ENCODE measurements at regions of chr9 and their contacts with region 1.

Region 1: DNA sequence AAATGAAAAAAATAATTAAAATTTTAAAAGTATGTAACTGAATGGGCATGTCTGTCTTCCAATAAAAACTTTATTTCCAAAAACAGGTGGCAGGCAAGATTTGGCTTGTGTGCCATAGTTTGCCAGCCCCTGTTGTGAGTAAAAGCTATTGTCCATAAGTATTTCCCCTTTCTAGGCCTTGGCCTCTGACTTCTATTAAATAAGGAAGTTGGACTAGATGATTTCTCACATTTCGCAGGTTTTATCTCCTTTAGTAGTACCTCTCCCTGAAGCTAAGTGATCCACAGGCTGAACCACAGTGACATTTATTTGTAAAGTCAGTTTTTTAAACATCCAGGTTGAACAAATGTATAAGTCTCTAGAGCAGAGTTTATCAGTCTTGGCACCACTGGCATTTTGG is 41.3 kb downstream of the RECK start:
- DNase-seq: no peak
- H3K4me3 ChIP-seq: no peak overlapping the region
- H3K27ac ChIP-seq: no peak overlapping the region
- H3K4me1 ChIP-seq: no peaks in the 10 kb centered on the region
- CTCF ChIP-seq: no peak

Region 2: GRCh38 chr9:35611230-35611797 is 466.7 kb before region 1 on chr9:
- CTCF ChIA-PET with region 1: no interaction called
- POLR2A ChIA-PET with region 1: no interaction called
- intact Hi-C with region 1: no loop called
- DNase-seq: peak; percentile 74
- H3K4me3 ChIP-seq: no peak overlapping the region
- H3K27ac ChIP-seq: no peak overlapping the region
- H3K4me1 ChIP-seq: peaks cover 25% of the 10 kb centered on the region
- CTCF ChIP-seq: peak; percentile 84

Region 3: DNA sequence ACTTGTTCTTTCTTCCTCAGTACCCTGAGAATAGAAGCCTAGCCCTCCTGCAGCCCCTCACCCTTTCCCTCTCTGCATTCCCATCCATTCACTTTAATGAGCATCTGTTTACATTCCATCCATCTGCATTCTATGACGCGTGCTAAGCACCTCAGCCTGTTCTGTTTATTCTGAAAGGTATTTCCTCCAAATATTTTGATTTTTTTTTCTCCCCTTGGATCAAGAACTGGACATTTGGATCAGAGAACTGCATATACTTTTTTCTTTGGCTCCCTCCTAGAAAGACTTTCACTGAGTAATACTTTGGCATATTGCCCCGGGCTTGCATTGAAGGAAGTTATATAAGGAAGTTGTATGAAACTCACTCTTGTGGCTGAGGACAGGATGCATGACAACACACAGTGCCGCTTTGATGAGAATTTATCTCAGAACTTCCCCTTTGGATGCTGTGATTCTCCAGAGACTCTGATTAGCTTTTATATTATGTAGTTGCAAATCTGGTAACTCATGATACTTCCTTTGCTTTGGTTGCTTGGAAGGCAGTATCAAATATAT is 233.3 kb before region 1 on chr9:
- CTCF ChIA-PET with region 1: no interaction called
- POLR2A ChIA-PET with region 1: no interaction called
- intact Hi-C with region 1: no loop called
- DNase-seq: peak; percentile 76
- H3K4me3 ChIP-seq: no peak overlapping the region
- H3K27ac ChIP-seq: peak overlapping the region; percentile 13
- H3K4me1 ChIP-seq: peaks cover 39% of the 10 kb centered on the region
- CTCF ChIP-seq: no peak

Region 4: DNA sequence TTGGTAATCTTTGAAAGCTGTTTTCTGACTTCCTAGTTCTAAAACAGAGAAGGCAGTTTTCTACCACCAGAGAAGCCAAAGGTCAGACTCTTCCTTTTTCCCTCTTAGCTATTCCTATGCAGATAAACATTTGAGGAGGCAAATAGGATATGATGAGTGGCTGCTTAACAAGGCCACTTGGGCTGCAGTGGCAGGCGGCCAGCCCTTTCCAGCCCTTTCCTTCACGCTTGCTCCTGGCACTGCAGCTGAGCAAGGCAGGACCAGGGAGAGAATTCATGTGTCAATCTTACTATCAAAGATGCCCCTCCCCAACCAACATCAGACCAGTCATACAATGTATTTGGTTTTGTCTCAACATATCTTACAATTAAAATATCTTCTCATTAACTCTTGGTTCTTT is 358.9 kb after region 1 on chr9:
- CTCF ChIA-PET with region 1: no interaction called
- POLR2A ChIA-PET with region 1: no interaction called
- intact Hi-C with region 1: no loop called
- DNase-seq: no peak
- H3K4me3 ChIP-seq: no peak overlapping the region
- H3K27ac ChIP-seq: no peak overlapping the region
- H3K4me1 ChIP-seq: no peaks in the 10 kb centered on the region
- CTCF ChIP-seq: no peak

Region 5: GRCh38 chr9:37520641-37521040 is 1442.6 kb after region 1 on chr9:
- CTCF ChIA-PET with region 1: no interaction called
- POLR2A ChIA-PET with region 1: interaction called, 10 read pairs
- intact Hi-C with region 1: no loop called
- DNase-seq: no peak
- H3K4me3 ChIP-seq: no peak overlapping the region
- H3K27ac ChIP-seq: no peak overlapping the region
- H3K4me1 ChIP-seq: no peaks in the 10 kb centered on the region
- CTCF ChIP-seq: no peak